Mammary epithelial cell (primary cell): ENCODE measurements at regions of chr2 and their contacts with region 1.

Region 1: GRCh38 chr2:290090-290722 is 2.3 kb upstream of the ALKAL2 start:
- DNase-seq: peak; percentile 40
- H3K4me3 ChIP-seq: peak overlapping the region; percentile 40 to 45 (median 45)
- H3K27ac ChIP-seq: no peak overlapping the region
- H3K4me1 ChIP-seq: peaks cover 8% of the 10 kb centered on the region
- H3K27me3 ChIP-seq: peaks cover 9% of the 10 kb centered on the region
- CTCF ChIP-seq: peak; percentile 62 to 82

Region 2: DNA sequence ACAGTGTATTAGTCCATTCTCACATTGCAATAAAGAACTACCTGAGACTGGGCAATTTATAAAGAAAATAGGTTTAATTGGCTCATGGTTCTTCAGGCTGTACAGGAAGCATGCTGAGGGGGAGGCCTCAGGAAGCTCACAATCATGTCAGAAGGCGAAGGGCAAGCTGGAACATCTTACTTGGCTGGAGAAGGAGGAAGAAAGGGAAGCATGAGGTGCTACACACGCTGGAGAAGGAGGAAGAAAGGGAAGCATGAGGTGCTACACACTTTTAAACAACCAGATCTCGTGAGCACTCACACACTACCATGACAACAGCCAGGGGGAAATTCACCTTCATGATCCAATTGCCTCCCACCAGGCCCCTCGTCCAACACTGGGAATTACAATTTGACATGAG is 148.6 kb before region 1 on chr2:
- CTCF ChIA-PET with region 1: no interaction called
- dilution Hi-C with region 1: no loop called
- in situ Hi-C with region 1: no loop called
- intact Hi-C with region 1: loop called (anchors 1 kb)
- DNase-seq: peak; percentile 17
- H3K4me3 ChIP-seq: no peak overlapping the region
- H3K27ac ChIP-seq: no peak overlapping the region
- H3K4me1 ChIP-seq: peaks cover 5% of the 10 kb centered on the region
- H3K27me3 ChIP-seq: no peaks in the 10 kb centered on the region
- CTCF ChIP-seq: no peak

Region 3: GRCh38 chr2:175880-176800 is 114.1 kb before region 1 on chr2:
- CTCF ChIA-PET with region 1: interaction called, 5 read pairs
- dilution Hi-C with region 1: no loop called
- in situ Hi-C with region 1: no loop called
- intact Hi-C with region 1: loop called (anchors 1 kb)
- DNase-seq: peak; percentile 44
- H3K4me3 ChIP-seq: no peak overlapping the region
- H3K27ac ChIP-seq: no peak overlapping the region
- H3K4me1 ChIP-seq: peaks cover 27% of the 10 kb centered on the region
- H3K27me3 ChIP-seq: no peaks in the 10 kb centered on the region
- CTCF ChIP-seq: no peak

Region 4: GRCh38 chr2:246489-247144 is 43.6 kb before region 1 on chr2:
- CTCF ChIA-PET with region 1: no interaction called
- dilution Hi-C with region 1: no loop called
- in situ Hi-C with region 1: no loop called
- intact Hi-C with region 1: loop called (anchors 1 kb)
- DNase-seq: peak; percentile 33
- H3K4me3 ChIP-seq: no peak overlapping the region
- H3K27ac ChIP-seq: no peak overlapping the region
- H3K4me1 ChIP-seq: no peaks in the 10 kb centered on the region
- H3K27me3 ChIP-seq: no peaks in the 10 kb centered on the region
- CTCF ChIP-seq: peak; percentile 36 to 64

Region 5: GRCh38 chr2:319059-319600 is 28.9 kb after region 1 on chr2:
- CTCF ChIA-PET with region 1: no interaction called
- dilution Hi-C with region 1: no loop called
- in situ Hi-C with region 1: no loop called
- intact Hi-C with region 1: no loop called
- DNase-seq: no peak
- H3K4me3 ChIP-seq: no peak overlapping the region
- H3K27ac ChIP-seq: no peak overlapping the region
- H3K4me1 ChIP-seq: no peaks in the 10 kb centered on the region
- H3K27me3 ChIP-seq: no peaks in the 10 kb centered on the region
- CTCF ChIP-seq: no peak

Region 6: DNA sequence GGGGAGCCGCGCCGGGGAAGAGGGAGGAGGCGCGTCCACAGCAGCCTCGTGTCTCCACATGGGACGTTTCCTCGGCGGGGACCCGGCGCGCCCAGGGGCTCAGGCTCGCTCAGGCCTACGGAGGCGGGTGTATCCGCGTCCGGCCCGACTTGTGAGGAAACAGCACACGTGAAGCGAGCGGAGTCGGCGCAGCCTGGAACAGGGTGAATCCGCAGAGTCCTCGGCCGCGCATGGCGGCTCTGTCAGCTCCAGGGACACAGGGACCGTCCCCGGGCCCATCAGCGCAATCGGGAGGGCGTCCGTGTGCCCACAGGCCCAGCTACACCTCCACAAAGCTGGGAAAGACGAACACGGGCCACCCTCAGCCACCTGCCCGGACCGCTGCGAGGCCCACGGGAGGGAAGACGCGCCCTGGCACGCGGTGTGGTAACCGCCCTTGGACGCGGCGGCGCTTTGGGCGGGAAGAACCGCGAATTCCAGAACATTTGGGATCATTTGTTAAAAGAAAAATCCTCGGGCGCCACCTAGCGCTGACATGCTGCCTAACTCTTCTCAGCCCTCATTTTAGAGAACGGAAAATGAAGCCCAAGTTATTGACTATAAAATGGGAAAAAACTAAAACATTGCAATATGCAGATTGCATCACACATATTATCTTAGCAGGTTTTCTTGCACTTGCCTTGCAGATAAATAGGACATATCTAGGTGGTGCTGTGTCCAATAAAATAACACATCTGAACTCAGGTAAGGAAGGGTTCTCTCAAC is 346.6 kb after region 1 on chr2:
- CTCF ChIA-PET with region 1: no interaction called
- dilution Hi-C with region 1: no loop called
- in situ Hi-C with region 1: no loop called
- intact Hi-C with region 1: loop called (anchors 2 kb)
- DNase-seq: peak; percentile 44
- H3K4me3 ChIP-seq: no peak overlapping the region
- H3K27ac ChIP-seq: no peak overlapping the region
- H3K4me1 ChIP-seq: no peaks in the 10 kb centered on the region
- H3K27me3 ChIP-seq: no peaks in the 10 kb centered on the region
- CTCF ChIP-seq: peak; percentile 67 to 68